ENCODE measurements at regions of chr20 and their contacts with region 1.

Region 1: DNA sequence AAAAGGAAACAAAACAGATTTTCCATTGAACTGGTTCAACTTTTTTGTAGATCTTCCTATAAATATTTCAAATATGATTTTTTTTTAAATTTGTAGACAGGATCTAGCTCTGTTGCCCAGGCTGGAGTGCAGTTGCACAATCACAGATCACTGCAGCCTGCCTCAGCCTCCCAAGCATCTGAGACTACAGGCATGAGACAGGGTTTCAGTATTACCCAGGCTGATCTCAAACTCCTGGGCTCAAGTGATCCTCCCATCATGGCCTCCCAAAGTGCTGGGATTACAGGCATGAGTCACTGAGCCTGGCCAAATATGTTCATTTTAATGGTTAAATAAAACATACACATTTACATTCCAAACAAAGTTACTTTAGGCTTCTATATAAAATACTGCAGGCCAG is 33.6 kb downstream of the SAMHD1 start:
- DNase-seq: peak; percentile 13
- ATAC-seq: peak; percentile 58; the same call in 1 of the 2 replicates
- H3K4me3 ChIP-seq: no peak overlapping the region
- H3K27ac ChIP-seq: no peak overlapping the region
- H3K4me1 ChIP-seq: no peaks in the 10 kb centered on the region
- H3K27me3 ChIP-seq: no peaks in the 10 kb centered on the region
- CTCF ChIP-seq: no peak

Region 2: DNA sequence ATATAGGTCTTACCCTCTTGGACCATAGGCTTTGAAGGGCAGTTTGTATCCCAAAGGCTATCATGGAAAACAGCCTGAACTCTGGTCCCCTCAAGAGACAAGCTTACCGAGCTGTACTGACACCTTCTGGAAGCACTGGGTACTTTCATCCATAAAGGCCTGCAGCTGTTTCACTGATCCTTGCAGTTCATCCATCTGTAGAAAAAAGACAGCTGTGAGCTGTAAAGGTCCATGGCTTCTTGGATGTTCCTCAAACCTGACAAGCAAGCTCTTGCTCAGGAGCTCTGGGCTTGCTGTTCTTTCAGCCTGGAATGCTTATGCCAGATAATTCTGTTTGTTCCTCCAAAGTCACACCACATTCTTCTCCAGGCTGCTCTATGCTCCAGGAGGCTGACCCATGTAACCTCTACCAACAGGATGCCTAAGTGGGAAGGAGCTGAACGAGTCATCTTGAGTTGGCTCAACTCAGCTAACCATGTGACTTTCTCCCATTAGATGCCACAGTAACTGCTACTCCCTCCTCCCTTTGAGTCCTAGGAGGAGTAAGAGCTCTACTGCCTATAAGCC is 163.2 kb before region 1 on chr20:
- CTCF ChIA-PET with region 1: no interaction called
- POLR2A ChIA-PET with region 1: no interaction called
- intact Hi-C with region 1: no loop called
- DNase-seq: peak; percentile 79
- ATAC-seq: peak; percentile 98
- H3K4me3 ChIP-seq: no peak overlapping the region
- H3K27ac ChIP-seq: no peak overlapping the region
- H3K4me1 ChIP-seq: no peaks in the 10 kb centered on the region
- H3K27me3 ChIP-seq: no peaks in the 10 kb centered on the region
- CTCF ChIP-seq: peak; percentile 87

Region 3: DNA sequence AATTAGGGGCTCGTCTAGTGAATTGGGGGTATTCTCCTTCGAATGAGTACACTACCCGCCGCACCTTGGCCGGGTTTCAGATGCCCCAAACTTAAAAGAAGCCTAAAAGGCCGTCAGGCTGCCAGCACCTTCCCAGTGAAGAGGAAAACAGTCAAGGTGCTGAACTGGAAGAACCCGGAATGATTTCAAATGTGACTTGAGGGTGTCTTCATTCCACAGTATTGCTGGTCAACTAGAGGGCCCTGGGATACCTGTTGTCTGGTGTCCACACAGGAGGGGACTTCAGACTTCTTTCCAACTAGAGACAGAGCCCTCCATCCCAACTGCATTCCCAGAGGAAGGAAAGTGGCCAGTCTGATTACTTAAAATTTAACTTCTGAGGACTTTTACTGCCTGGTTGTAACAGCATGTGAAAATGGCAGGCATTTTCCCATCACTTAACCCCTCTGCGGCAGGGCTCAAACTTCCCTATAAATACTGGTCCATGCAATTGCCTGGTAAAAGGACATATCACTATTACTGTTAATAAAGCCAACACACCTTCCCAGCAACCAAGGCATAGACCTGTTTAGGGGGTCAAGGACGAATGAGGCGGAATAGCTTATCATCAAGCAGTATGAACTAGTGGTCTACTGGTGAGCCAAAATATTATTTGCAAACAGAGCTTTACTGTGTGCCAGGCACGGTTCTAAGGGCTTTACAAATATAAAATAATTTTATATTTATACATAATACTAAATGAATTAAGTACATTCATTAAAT is 34.2 kb after region 1 on chr20:
- CTCF ChIA-PET with region 1: interaction called, 3 read pairs
- POLR2A ChIA-PET with region 1: interaction called, 13 read pairs
- intact Hi-C with region 1: no loop called
- DNase-seq: peak; percentile 15
- ATAC-seq: peak; percentile 7
- H3K4me3 ChIP-seq: peak overlapping the region; percentile 93
- H3K27ac ChIP-seq: no peak overlapping the region
- H3K4me1 ChIP-seq: peaks cover 14% of the 10 kb centered on the region; the same call in 1 of the 2 replicates
- H3K27me3 ChIP-seq: no peaks in the 10 kb centered on the region
- CTCF ChIP-seq: no peak

Region 4: DNA sequence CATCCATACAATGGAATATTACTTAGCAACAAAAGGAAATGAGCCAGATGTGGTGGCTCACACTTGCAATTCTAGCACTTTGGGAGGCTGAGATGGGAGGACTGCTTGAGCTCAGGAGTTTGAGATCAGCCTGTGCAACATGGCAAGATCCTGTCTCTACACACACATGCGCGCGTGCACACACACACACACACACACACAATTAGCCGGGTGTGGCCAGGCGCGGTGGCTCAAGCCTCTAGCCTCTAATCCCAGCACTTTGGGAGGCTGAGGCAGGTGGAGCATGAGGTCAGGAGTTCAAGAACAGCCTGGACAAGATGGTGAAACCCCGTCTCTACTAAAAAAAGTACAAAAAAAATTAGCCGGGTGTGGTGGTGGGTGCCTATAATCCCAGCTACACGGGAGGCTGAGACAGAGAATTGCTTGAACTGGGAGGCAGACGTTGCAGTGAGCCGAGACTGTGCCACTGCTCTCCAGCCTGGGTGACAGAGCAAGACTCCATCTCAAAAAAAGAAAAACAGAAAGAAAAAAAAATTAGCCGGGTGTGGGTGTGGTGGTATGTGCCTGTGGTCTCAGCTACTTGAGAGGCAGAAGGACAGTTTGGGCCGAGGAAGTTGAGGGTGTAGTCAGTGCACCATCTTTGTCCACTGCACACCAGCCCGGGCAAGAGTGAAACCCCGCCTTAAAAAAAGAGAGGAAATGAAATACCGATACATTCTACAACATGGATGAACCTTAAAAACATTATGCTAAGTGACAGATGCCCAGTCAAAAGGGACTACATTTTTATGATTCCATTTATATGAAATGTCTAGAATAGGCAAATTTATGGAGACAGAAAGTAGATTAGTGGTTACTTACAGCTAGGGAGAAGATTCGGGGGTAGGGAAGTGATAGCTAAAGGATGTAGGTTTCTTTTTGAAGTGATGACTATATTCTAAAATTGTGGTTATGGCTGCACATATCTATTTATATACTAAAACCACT is 125.3 kb after region 1 on chr20:
- CTCF ChIA-PET with region 1: no interaction called
- POLR2A ChIA-PET with region 1: no interaction called
- intact Hi-C with region 1: no loop called
- DNase-seq: no peak
- ATAC-seq: no peak
- H3K4me3 ChIP-seq: no peak overlapping the region
- H3K27ac ChIP-seq: no peak overlapping the region
- H3K4me1 ChIP-seq: no peaks in the 10 kb centered on the region
- H3K27me3 ChIP-seq: no peaks in the 10 kb centered on the region
- CTCF ChIP-seq: no peak